GM12878 (cell line): ENCODE measurements at regions of chr18 and their contacts with region 1.

Region 1: DNA sequence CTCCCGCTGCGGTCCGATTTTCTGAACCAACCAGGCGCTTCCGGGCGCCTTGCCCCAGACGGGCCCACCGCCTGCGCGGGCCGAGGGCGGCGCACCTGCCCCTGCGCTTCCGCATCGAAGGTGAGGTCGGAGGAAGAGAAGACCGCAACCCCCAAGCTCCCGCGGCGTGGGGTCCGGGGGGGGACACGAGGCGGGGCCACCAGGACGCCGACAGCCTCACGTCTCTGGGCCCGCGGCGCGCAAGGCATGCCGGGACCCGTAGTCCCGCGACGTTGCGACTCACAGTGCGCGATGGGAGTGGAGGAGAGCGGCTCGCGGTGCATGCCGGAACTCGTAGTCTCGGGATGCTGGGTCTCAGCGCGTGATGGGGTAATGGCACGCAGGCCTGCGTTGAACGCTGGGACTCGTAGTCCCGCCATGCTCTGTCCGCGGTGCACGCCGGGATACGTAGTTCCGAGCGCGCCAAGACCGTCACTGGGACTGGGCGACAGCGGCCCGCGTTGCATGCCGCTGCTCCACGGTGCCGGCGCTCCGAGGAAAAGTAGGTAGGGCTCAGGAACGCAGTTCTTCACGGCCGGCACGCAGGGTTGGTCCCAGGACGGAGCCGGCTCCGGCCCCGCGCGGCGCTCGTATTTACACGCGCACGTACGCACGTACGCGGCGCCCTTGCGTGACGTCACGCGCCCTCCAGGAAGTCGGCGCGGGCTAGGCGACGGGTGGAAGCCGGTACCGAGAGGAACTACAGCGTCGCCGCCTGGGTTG is at the start of gene CTDP1:
- DNase-seq: peak; percentile 98
- ATAC-seq: peak; percentile 95
- H3K4me3 ChIP-seq: peak within 1 kb of the TSS; percentile 71
- H3K27ac ChIP-seq: peak within 1 kb of the TSS; percentile 98
- H3K4me1 ChIP-seq: peaks cover 31% of the 10 kb centered on the region
- H3K27me3 ChIP-seq: no peaks in the 10 kb centered on the region
- CTCF ChIP-seq: no peak
- EP300 ChIP-seq: peak in 1 of 2 experiments; percentile 25; a peak in 1 of 4 replicates
- POLR2A ChIP-seq: peak; percentile 89
- RAD21 ChIP-seq: no peak
- polyA plus RNA-seq, gene CTDP1: 0.32 to 1.6 TPM

Region 2: DNA sequence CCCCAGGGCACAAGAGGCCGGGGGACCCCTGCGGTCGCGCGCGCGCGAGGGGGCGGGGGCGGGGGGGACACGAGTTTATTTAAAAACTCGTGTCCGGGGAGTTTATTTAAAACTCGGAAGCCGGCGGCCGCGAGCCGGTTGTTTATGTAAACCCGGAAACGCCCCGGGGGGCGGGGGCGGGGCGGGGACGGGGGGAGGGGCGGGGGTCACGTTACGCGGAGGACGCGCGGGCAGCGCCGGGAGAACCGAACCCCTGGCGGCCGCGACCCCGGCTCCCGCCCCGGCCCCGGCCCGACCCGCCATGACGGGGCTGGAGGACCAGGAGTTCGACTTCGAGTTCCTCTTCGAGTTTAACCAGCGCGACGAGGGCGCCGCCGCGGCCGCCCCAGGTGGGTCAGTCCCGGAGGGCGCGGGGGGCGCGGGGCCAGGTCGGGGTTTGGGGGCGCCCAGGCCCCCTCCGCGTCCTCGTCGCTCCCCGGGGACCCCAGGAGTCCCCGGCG is 279.2 kb before region 1 on chr18:
- CTCF ChIA-PET with region 1: no interaction called
- POLR2A ChIA-PET with region 1: no interaction called
- RAD21 ChIA-PET with region 1: no interaction called
- SMC1A ChIA-PET with region 1: no interaction called
- in situ Hi-C with region 1: no loop called
- intact Hi-C with region 1: loop called (anchors 1 kb)
- DNase-seq: no peak
- ATAC-seq: peak; percentile 15
- H3K4me3 ChIP-seq: peak overlapping the region; percentile 82; the same call in 1 of the 2 replicates
- H3K27ac ChIP-seq: no peak overlapping the region
- H3K4me1 ChIP-seq: peaks cover 21% of the 10 kb centered on the region
- H3K27me3 ChIP-seq: peaks cover 0 to 6% of the 10 kb centered on the region in 2 experiments; a peak in 1 of 4 replicates
- CTCF ChIP-seq: no peak
- EP300 ChIP-seq: no peak
- POLR2A ChIP-seq: no peak; the same call in 1 of the 2 replicates
- RAD21 ChIP-seq: no peak

Region 3: GRCh38 chr18:79951578-79952455 is 272.5 kb after region 1 on chr18 and contains the start of gene SLC66A2:
- CTCF ChIA-PET with region 1: no interaction called
- POLR2A ChIA-PET with region 1: no interaction called
- RAD21 ChIA-PET with region 1: no interaction called
- SMC1A ChIA-PET with region 1: no interaction called
- in situ Hi-C with region 1: loop called (anchors 5 kb)
- intact Hi-C with region 1: no loop called
- DNase-seq: no peak
- ATAC-seq: peak; percentile 87
- H3K4me3 ChIP-seq: peak within 1 kb of the TSS; percentile 84
- H3K27ac ChIP-seq: peak within 1 kb of the TSS; percentile 75
- H3K4me1 ChIP-seq: peaks cover 14% of the 10 kb centered on the region
- H3K27me3 ChIP-seq: no peaks in the 10 kb centered on the region
- CTCF ChIP-seq: no peak
- EP300 ChIP-seq: no peak
- POLR2A ChIP-seq: peak; percentile 65; the same call in 1 of the 2 replicates
- RAD21 ChIP-seq: no peak
- polyA plus RNA-seq, gene SLC66A2: 0.69 to 2.7 TPM

Region 4: GRCh38 chr18:79964330-79965118 is 285.2 kb after region 1 on chr18 and contains the start of gene HSBP1L1:
- CTCF ChIA-PET with region 1: no interaction called
- POLR2A ChIA-PET with region 1: no interaction called
- RAD21 ChIA-PET with region 1: no interaction called
- SMC1A ChIA-PET with region 1: no interaction called
- in situ Hi-C with region 1: loop called (anchors 5 kb)
- intact Hi-C with region 1: loop called (anchors 2 kb)
- DNase-seq: no peak
- ATAC-seq: peak; percentile 67
- H3K4me3 ChIP-seq: peak within 1 kb of the TSS; percentile 37
- H3K27ac ChIP-seq: peak within 1 kb of the TSS; percentile 68
- H3K4me1 ChIP-seq: peaks cover 25% of the 10 kb centered on the region
- H3K27me3 ChIP-seq: no peaks in the 10 kb centered on the region
- CTCF ChIP-seq: peak in 2 of 3 experiments; percentile 10 to 19; a peak in 1 of 6 replicates
- EP300 ChIP-seq: no peak
- POLR2A ChIP-seq: peak; percentile 81
- RAD21 ChIP-seq: no peak
- polyA plus RNA-seq, gene HSBP1L1: 0.97 to 2.1 TPM

Region 5: DNA sequence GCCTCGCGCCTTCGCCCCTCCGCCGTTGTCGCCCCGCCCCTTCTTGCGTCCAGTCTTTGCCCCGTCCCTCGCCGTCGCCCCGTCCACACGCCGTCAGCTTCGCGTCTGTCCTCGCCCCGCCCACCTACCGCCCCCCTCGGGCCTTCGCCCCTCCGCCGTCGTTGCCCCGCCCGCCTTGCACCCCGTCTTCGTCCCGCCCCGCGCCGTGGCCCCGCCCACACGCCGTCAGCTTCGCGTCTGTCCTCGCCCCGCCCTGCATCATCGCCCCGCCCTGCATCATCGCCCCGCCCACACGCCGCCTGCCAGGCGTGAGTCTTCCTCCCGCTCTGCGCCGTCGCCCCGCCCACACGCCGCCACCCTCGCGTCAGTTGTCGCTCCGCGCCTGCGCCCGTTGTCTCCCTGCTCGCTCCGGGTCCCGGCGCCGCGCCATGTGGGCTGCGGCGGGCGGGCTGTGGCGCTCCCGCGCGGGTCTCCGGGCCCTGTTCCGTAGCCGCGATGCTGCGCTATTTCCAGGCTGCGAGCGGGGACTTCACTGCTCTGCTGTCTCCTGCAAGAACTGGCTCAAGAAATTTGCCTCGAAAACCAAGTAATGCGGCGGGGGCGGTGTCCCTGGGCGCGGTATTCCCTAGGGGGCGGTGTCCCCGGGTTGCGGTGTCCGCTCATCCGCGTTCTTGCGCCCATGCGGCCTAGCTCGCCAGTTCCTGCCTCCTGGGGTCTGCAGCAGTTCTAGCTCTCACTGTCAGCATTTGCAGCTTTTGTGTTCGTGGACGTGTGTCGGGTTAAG is 355.0 kb after region 1 on chr18 and contains the start of gene RBFA:
- CTCF ChIA-PET with region 1: no interaction called
- POLR2A ChIA-PET with region 1: interaction called, 3 read pairs
- RAD21 ChIA-PET with region 1: no interaction called
- SMC1A ChIA-PET with region 1: no interaction called
- in situ Hi-C with region 1: loop called (anchors 5 kb)
- intact Hi-C with region 1: loop called (anchors 1 kb)
- DNase-seq: peak; percentile 94
- ATAC-seq: peak; percentile 88
- H3K4me3 ChIP-seq: peak within 1 kb of the TSS; percentile 79
- H3K27ac ChIP-seq: peak within 1 kb of the TSS; percentile 64
- H3K4me1 ChIP-seq: peaks cover 3% of the 10 kb centered on the region; the same call in 1 of the 2 replicates
- H3K27me3 ChIP-seq: no peaks in the 10 kb centered on the region
- CTCF ChIP-seq: peak in 2 of 3 experiments; percentile 11 to 23; a peak in 2 of 6 replicates
- EP300 ChIP-seq: 0 out of 4 replicates have a peak, but pooled peaks of 1 of the 2 experiments have one; percentile 18
- POLR2A ChIP-seq: peak; percentile 85
- RAD21 ChIP-seq: no peak
- polyA plus RNA-seq, gene RBFA: 7.2 to 9.1 TPM

Region 6: DNA sequence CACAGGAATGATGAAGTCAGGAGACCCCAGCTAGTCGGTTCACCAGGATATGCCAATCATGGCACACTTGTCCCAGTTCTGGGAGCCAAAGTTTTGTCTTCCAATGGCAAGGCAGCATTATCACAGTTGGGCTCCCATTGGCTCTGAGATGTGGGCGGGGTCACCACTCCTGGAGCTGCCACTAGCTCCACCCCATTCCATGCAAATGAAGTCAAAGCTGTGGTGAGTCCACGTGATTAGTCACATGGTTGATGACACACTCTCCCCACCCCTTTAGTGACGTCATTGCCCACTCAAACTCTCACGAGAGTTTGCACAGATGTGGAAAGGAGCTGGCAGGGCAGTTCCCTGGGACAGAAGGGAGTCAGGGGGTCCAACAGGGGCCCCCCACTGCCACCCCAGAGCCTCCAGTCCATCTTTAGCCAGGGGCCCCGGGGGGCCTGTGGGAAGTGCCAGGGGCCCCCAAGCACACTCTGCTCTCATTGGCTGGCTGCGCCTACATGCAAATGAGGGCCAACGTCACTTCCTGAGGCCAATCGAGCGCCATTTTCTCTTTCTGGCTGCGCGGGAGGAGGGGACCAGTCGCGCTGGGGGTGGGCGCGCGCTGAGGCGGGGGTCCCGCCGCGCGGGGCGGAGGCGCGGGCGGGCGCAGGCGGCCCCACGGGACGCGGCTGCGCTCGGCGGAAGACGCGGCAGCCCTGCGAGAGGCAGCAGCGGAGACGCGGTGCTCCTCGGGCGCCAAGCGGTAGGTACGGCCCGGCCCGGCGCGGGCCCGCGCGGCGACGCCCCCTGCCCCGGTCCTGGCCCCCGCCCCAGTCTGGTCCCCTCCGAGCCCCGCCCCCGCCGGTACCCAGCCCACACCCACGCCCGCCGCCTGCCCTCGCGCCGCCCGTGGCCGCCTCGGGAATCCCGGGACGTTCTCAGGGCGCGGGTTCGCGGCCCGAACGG is 429.7 kb after region 1 on chr18 and contains the start of gene ADNP2:
- CTCF ChIA-PET with region 1: no interaction called
- POLR2A ChIA-PET with region 1: no interaction called
- RAD21 ChIA-PET with region 1: no interaction called
- SMC1A ChIA-PET with region 1: no interaction called
- in situ Hi-C with region 1: no loop called
- intact Hi-C with region 1: loop called (anchors 2 kb)
- DNase-seq: peak; percentile 75
- ATAC-seq: peak; percentile 78
- H3K4me3 ChIP-seq: peak within 1 kb of the TSS; percentile 83
- H3K27ac ChIP-seq: peak within 1 kb of the TSS; percentile 66
- H3K4me1 ChIP-seq: peaks cover 19% of the 10 kb centered on the region
- H3K27me3 ChIP-seq: no peaks in the 10 kb centered on the region
- CTCF ChIP-seq: no peak
- EP300 ChIP-seq: no peak
- POLR2A ChIP-seq: peak; percentile 89
- RAD21 ChIP-seq: no peak
- polyA plus RNA-seq, gene ADNP2: 6.9 to 13.1 TPM

Region 7: GRCh38 chr18:80147418-80148325 is 468.4 kb after region 1 on chr18:
- CTCF ChIA-PET with region 1: no interaction called
- POLR2A ChIA-PET with region 1: no interaction called
- RAD21 ChIA-PET with region 1: no interaction called
- SMC1A ChIA-PET with region 1: no interaction called
- in situ Hi-C with region 1: no loop called
- intact Hi-C with region 1: loop called (anchors 10 kb)
- DNase-seq: peak; percentile 60
- ATAC-seq: peak; percentile 96
- H3K4me3 ChIP-seq: peak overlapping the region; percentile 72
- H3K27ac ChIP-seq: no peak overlapping the region
- H3K4me1 ChIP-seq: peaks cover 5% of the 10 kb centered on the region
- H3K27me3 ChIP-seq: no peaks in the 10 kb centered on the region
- CTCF ChIP-seq: no peak
- EP300 ChIP-seq: no peak
- POLR2A ChIP-seq: peak; percentile 77; the same call in 1 of the 2 replicates
- RAD21 ChIP-seq: no peak